CD4-positive, alpha-beta memory T cell (primary cell): ENCODE measurements at regions of chr12 and their contacts with region 1.

Region 1: DNA sequence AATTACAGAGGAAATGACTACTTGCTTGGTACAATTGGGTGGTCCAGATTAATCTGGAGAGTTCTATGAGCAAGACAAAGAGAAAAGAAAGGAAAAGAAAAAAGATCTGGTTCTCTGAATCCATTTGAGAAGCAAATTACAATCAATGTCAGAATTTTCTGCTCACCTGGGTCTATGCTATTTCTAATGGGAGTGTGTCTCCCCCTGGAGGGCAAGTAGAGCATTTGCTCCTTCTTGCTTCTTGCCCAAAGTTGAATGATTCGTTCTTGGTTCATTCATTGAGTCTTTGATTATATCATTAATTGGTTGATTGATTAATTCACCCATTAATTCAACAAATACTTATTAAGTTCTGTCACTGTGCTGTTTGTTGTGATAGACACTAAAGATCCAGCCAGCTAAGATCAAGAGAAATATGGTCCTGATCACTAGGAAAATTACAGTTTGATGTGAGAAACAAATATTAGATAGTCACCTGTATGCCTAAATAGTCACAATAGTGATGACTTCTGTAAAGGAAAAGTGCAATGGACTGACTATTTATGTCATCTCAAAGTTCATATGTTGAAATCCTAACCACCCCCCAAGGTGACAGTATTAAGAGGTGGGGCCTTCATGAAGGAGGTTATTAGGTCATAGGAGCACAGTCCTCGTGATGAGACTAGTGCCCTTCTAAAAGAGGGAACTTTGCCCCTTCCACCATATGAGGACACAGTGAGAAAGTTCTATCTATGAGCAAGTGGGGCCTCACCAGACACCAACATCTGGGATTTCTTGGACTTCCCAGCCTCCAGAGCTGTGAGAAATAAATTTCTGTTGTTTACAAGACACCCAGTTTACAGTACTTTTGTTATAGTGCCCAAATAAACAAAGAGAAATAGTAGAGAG is 8.0 kb upstream of the ASB8 start:
- DNase-seq: peak; percentile 61 to 73 (median 71)
- H3K4me3 ChIP-seq: no peak overlapping the region
- H3K4me3 Mint-ChIP-seq: no peak overlapping the region
- H3K27ac ChIP-seq: no peak overlapping the region
- H3K27ac Mint-ChIP-seq: no peak overlapping the region
- H3K4me1 ChIP-seq: no peaks in the 10 kb centered on the region
- H3K4me1 Mint-ChIP-seq: peaks cover 0 to 6% (median 1%) of the 10 kb centered on the region in 4 donors
- H3K27me3 ChIP-seq: no peaks in the 10 kb centered on the region
- H3K27me3 Mint-ChIP-seq: peaks cover 6 to 7% of the 10 kb centered on the region in 2 donors

Region 2: DNA sequence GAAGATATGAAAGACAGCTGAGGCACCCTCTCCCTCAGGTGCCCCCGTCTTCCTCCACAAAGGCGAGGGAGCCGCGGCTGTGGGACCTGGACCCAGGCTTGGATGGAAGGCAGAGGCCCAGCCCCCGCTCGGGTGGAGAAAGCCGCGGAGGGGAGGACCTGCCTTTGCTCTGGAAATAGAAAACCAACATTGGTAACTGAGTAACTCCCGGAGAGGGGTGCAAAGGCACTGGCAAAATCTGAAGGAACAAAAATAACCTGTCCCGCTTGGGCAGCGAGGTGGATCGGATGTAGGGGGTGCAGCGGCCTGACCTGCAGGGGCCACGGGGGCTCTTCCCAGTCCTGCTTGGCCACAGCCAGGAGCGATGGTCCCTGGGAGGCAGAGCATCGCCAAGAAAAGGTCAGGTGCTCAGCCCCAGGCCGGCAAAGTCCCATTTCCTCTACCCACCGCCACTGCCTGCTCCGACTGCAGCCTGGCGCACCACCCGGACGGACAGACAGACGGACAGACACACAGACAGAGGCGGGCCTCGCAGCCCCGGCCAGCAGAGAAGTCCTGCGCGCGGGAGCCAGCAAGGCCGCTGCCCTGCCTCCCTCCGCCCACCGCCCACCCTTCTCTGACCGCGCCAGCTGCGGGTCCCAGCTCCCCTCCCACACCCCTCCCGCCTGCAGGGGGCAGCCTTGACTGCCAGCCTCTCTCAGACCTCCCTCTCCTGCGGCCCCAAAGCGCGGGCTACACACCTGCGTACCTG is 223.3 kb before region 1 on chr12:
- CTCF ChIA-PET with region 1: interaction called, 3 read pairs
- POLR2A ChIA-PET with region 1: no interaction called
- intact Hi-C with region 1: loop called (anchors 1 kb)
- DNase-seq: peak; percentile 37 to 50 (median 40)
- H3K4me3 ChIP-seq: no peak overlapping the region
- H3K4me3 Mint-ChIP-seq: no peak overlapping the region
- H3K27ac ChIP-seq: no peak overlapping the region
- H3K27ac Mint-ChIP-seq: no peak overlapping the region
- H3K4me1 ChIP-seq: no peaks in the 10 kb centered on the region
- H3K4me1 Mint-ChIP-seq: peaks cover 0 to 9% (median under 1%) of the 10 kb centered on the region in 4 donors
- H3K27me3 ChIP-seq: no peaks in the 10 kb centered on the region
- H3K27me3 Mint-ChIP-seq: peaks cover 13 to 15% of the 10 kb centered on the region in 2 donors

Region 3: GRCh38 chr12:48084066-48084465 is 81.3 kb before region 1 on chr12:
- CTCF ChIA-PET with region 1: interaction called, 7 read pairs
- POLR2A ChIA-PET with region 1: no interaction called
- intact Hi-C with region 1: loop called (anchors 1 kb)
- DNase-seq: no peak
- H3K4me3 ChIP-seq: no peak overlapping the region
- H3K4me3 Mint-ChIP-seq: no peak overlapping the region
- H3K27ac ChIP-seq: no peak overlapping the region
- H3K27ac Mint-ChIP-seq: peak overlapping the region in 1 of 7 donors; percentile 17
- H3K4me1 ChIP-seq: no peaks in the 10 kb centered on the region
- H3K4me1 Mint-ChIP-seq: no peaks in the 10 kb centered on the region
- H3K27me3 ChIP-seq: no peaks in the 10 kb centered on the region
- H3K27me3 Mint-ChIP-seq: no peaks in the 10 kb centered on the region

Region 4: DNA sequence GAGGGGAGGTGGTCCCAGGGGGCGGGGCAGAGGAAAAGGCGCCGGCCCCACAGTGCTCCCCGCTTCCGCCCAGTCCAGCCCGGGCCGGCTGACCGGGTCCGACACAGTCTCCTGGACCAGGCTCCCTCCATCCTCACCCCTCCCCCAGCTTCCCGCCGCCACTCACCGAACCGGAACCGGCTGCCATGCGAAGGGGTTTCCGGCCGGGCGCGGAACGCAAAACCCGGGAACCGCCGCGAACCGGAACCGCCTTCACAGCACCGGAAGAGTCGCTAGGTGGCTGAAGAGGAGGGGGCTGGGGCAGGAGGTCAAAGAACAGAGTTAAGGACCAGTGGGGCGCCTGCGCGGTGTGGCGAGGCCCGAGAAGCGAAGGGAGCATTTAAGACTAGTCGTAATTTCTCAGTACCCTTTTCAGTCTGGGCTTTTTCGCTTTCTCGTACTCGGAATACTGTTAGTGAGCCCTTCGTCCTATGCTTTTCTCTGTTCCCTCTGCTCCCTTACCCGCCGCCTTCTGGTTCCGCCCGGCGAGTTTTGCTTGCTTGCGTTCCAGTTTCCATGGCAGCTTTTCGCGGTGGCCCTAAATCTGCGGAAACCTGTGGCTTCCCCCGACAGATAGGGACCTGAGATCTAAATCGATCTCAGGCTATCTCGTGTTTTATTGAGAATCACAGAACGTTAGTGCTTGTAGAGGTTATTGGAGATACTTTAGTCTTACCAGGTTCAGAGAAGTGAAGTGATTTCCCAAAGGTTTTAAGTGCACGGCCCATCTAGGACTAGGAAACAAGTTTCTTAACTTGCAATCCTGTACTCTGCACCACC is 59.3 kb before region 1 on chr12 and contains the start of gene SENP1:
- CTCF ChIA-PET with region 1: interaction called, 4 read pairs
- POLR2A ChIA-PET with region 1: interaction called, 90 read pairs
- intact Hi-C with region 1: loop called (anchors 2 kb)
- DNase-seq: peak; percentile 91 to 93 (median 92)
- H3K4me3 ChIP-seq: peak within 1 kb of the TSS; percentile 84 to 93
- H3K4me3 Mint-ChIP-seq: peak within 1 kb of the TSS; percentile 89 to 97 (median 92)
- H3K27ac ChIP-seq: peak within 1 kb of the TSS; percentile 96
- H3K27ac Mint-ChIP-seq: peak within 1 kb of the TSS; percentile 93 to 100 (median 99)
- H3K4me1 ChIP-seq: peaks cover 42% of the 10 kb centered on the region
- H3K4me1 Mint-ChIP-seq: peaks cover 42 to 65% (median 52%) of the 10 kb centered on the region in 4 donors
- H3K27me3 ChIP-seq: no peaks in the 10 kb centered on the region
- H3K27me3 Mint-ChIP-seq: no peaks in the 10 kb centered on the region
- total RNA-seq, gene SENP1: 28.7 to 35.1 TPM

Region 5: GRCh38 chr12:48175613-48176416 is 10.5 kb after region 1 on chr12:
- CTCF ChIA-PET with region 1: interaction called, 28 read pairs
- POLR2A ChIA-PET with region 1: interaction called, 3 read pairs
- intact Hi-C with region 1: no loop called
- DNase-seq: no peak
- H3K4me3 ChIP-seq: no peak overlapping the region
- H3K4me3 Mint-ChIP-seq: peak overlapping the region in 4 of 8 donors; percentile 14 to 66 (median 47)
- H3K27ac ChIP-seq: no peak overlapping the region
- H3K27ac Mint-ChIP-seq: peak overlapping the region in 3 of 7 donors; percentile 30 to 84 (median 69)
- H3K4me1 ChIP-seq: no peaks in the 10 kb centered on the region
- H3K4me1 Mint-ChIP-seq: peaks cover 3 to 8% (median 4%) of the 10 kb centered on the region in 4 donors
- H3K27me3 ChIP-seq: no peaks in the 10 kb centered on the region
- H3K27me3 Mint-ChIP-seq: peaks cover 5 to 17% of the 10 kb centered on the region in 2 donors

Region 6: DNA sequence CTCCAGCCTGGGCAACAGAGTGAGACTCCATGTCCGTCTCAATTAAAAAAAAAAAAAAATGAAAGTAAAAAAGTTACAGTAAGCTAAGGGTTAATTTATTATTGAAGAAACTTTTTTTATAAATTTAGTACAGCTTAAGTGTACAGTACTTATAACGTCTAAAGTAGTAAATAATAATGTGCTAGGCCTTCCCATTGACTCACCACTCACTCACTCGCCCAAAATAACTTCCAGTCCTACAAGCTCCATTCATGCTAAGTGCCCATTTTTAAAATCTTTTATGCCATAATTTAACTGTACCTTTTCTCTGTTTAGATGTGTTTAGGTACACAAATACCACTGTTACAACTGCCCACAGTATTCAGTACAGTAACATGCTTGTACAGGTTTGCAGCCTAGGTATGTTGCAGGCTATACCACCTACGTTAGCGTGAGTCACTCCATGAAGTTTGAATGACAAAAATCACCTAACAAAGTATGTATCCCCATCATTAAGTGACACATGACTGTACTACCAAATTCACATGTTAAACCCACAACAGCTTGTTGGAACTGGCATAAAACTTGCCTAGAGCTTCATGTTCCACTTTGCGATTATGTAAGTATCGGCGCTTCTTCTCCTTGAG is 506.0 kb after region 1 on chr12:
- CTCF ChIA-PET with region 1: no interaction called
- POLR2A ChIA-PET with region 1: no interaction called
- intact Hi-C with region 1: no loop called
- DNase-seq: no peak
- H3K4me3 ChIP-seq: no peak overlapping the region
- H3K4me3 Mint-ChIP-seq: no peak overlapping the region
- H3K27ac ChIP-seq: no peak overlapping the region
- H3K27ac Mint-ChIP-seq: no peak overlapping the region
- H3K4me1 ChIP-seq: peaks cover 10% of the 10 kb centered on the region
- H3K4me1 Mint-ChIP-seq: peaks cover 7 to 19% (median 14%) of the 10 kb centered on the region in 4 donors
- H3K27me3 ChIP-seq: no peaks in the 10 kb centered on the region
- H3K27me3 Mint-ChIP-seq: no peaks in the 10 kb centered on the region